ENCODE measurements at regions of chr2 and their contacts with region 1.

Region 1: DNA sequence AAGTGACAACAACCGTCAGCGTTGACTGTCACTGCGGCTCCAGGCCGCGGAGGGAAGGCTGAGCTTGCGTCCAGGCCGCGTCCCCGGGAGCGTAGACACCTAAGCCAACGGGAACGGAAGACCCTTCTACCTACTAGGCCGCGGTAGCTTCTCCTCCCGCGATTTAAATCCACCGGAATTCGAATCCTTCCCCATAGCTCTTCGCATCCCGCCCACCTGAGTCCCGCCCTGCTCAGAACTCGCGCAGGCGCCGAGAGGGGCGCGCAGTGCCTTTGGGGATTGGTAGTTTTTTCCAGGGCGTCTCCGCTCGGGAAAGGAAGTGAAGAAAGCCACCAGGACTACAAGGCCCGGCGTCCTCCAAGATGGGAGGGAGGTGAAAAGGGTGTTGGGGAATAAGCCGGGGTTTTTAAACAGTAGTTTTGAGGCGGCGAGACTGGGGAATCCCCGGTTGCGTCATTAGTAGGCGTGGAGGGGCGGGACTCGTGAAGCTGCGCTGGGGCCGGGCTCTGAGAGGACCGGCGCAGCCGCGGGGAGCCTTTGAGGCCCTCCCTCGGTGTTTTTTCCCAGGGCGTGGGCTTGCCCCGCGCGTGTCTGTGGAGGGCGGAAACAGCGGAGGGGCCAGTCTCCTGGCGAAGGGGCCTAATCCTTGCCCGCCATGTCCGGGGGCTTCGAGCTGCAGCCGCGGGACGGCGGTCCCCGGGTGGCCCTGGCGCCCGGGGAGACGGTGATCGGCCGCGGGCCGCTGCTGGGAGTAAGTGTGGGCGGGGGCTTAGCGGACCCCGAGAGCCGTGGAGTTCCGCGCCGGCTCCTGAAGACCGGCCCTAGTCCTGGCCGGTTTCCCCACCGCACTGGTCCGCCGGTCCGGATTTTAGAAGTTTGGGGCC is at the starts of genes APLF and FBXO48:
- DNase-seq: peak; percentile 99
- H3K4me3 Mint-ChIP-seq: peak within 1 kb of the TSS; percentile 94
- H3K27ac Mint-ChIP-seq: peak within 1 kb of the TSS; percentile 93
- H3K4me1 Mint-ChIP-seq: peaks cover 40% of the 10 kb centered on the region
- H3K27me3 Mint-ChIP-seq: no peaks in the 10 kb centered on the region
- total RNA-seq, gene APLF: 2.4 to 2.7 TPM
- total RNA-seq, gene FBXO48: 1.1 to 1.2 TPM

Region 2: GRCh38 chr2:68282811-68283418 is 184.4 kb before region 1 on chr2:
- CTCF ChIA-PET with region 1: no interaction called
- intact Hi-C with region 1: no loop called
- DNase-seq: peak; percentile 18
- H3K4me3 Mint-ChIP-seq: no peak overlapping the region
- H3K27ac Mint-ChIP-seq: no peak overlapping the region
- H3K4me1 Mint-ChIP-seq: no peaks in the 10 kb centered on the region
- H3K27me3 Mint-ChIP-seq: peaks cover 2% of the 10 kb centered on the region

Region 3: GRCh38 chr2:68385220-68385906 is 82.0 kb before region 1 on chr2:
- CTCF ChIA-PET with region 1: interaction called, 5 read pairs
- intact Hi-C with region 1: loop called (anchors 1 kb)
- DNase-seq: peak; percentile 72
- H3K4me3 Mint-ChIP-seq: no peak overlapping the region
- H3K27ac Mint-ChIP-seq: peak overlapping the region; percentile 9
- H3K4me1 Mint-ChIP-seq: peaks cover 40% of the 10 kb centered on the region
- H3K27me3 Mint-ChIP-seq: peaks cover 5% of the 10 kb centered on the region

Region 4: GRCh38 chr2:68487773-68488355 is 20.5 kb after region 1 on chr2:
- CTCF ChIA-PET with region 1: interaction called, 10 read pairs
- intact Hi-C with region 1: no loop called
- DNase-seq: no peak
- H3K4me3 Mint-ChIP-seq: no peak overlapping the region
- H3K27ac Mint-ChIP-seq: no peak overlapping the region
- H3K4me1 Mint-ChIP-seq: peaks cover 2% of the 10 kb centered on the region
- H3K27me3 Mint-ChIP-seq: no peaks in the 10 kb centered on the region

Region 5: DNA sequence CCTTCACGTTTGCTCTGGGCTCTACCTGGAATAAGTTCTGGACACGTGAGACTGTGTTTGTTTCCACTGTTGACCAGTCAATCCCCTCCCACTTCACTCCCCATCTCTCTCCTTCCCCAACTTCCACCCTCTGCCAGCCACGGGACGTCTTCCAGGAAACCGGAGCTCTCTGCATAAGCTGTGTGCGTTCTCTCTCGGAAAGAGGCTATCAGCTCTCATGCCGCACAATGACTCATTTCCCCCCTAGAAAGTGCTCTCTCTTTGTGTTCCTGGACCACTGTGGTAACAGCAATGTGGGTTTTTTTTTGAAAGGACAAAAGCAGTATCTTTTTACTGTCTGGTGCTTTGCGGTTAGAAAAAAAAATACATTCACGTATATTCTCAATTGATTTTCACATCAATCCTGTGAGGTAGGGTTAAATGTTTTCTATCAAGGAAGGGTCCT is 186.2 kb after region 1 on chr2:
- CTCF ChIA-PET with region 1: no interaction called
- intact Hi-C with region 1: loop called (anchors 1 kb)
- DNase-seq: peak; percentile 78
- H3K4me3 Mint-ChIP-seq: peak overlapping the region; percentile 0
- H3K27ac Mint-ChIP-seq: peak overlapping the region; percentile 63
- H3K4me1 Mint-ChIP-seq: peaks cover 43% of the 10 kb centered on the region
- H3K27me3 Mint-ChIP-seq: peaks cover 18% of the 10 kb centered on the region

Region 6: GRCh38 chr2:68742626-68743415 is 275.5 kb after region 1 on chr2:
- CTCF ChIA-PET with region 1: interaction called, 7 read pairs
- intact Hi-C with region 1: loop called (anchors 1 kb)
- DNase-seq: peak; percentile 45
- H3K4me3 Mint-ChIP-seq: no peak overlapping the region
- H3K27ac Mint-ChIP-seq: peak overlapping the region; percentile 91
- H3K4me1 Mint-ChIP-seq: peaks cover 93% of the 10 kb centered on the region
- H3K27me3 Mint-ChIP-seq: no peaks in the 10 kb centered on the region

Region 7: DNA sequence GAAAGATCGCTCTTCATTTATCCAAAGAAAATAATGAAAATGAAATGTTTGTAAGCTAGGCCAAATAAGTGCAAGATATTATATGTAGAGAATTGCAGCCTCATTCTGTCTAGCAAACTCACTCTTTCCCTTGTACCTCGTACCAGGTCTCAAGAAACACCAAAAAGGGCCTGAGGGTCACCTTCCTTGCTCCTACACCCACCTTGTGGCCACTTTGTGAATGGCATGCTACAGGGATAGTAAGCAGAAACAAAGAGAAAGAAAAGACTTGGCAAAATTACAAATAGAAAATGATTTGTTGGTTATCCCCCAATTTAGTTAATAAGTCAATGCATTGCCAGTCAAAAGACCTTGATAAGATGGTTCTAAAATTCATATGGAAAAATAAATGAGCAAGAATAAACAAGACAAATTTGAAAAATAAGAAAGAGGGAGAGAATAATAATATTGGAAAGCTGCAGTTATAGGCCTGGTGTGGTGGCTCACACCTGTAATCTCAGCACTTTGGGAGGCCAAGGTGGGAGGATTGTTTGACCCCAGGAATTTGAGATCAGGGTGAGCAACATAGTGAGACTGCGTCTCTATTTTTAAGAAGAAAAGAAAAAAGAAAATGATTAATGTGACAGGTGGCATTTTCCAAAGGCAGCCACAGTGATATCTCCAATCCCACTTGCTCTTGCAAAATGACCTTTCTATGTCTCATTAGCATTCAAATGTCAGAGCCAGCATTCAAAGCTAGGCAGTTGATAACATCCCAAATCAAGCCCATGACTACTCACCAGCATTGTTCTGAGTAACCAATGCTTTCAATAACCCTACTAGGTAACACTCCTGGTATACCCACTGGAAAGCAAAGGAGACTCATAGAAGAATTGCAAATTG is 442.7 kb after region 1 on chr2:
- CTCF ChIA-PET with region 1: interaction called, 10 read pairs
- intact Hi-C with region 1: loop called (anchors 1 kb)
- DNase-seq: peak; percentile 92
- H3K4me3 Mint-ChIP-seq: no peak overlapping the region
- H3K27ac Mint-ChIP-seq: peak overlapping the region; percentile 68
- H3K4me1 Mint-ChIP-seq: peaks cover 34% of the 10 kb centered on the region
- H3K27me3 Mint-ChIP-seq: no peaks in the 10 kb centered on the region